Testis (tissue), 5 donors: ENCODE measurements at regions of chr4 and their contacts with region 1.

Region 1: DNA sequence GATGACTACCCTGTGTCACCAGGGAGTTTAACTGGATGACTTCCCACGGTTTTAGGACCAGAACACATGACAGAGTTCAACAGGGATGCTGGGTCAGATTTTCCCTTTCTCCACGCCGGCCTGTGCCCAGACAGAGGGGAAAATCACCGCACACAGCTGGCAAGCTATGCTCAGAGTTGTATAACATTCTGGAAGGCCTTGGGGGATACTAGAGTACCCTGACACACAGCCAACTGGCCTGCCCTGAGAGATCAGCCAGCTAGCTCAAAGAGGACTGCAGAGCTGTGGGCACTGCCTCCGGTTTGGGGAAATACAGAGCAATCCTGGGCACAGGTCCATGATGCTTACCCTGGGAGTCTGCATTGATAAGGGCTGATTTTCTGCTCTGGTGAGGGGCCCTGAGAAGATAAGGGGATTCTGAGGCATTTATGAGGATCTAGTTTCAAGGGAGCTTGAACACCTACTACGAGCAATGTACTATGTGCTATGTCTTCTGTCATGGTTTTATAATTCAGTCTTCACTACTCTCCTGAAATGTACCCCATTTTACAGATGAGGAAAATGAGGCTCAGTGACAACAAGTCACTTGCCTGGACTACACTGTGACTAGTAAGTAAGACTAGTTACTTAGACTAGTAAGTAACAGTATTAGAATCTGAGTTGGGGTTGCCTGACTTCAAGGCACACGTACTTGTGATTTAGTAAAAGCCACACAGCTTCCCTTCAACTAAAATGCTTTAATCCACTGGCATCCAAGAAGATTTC is 14.7 kb downstream of the C4orf54 start:
- DNase-seq: peak; percentile 84
- H3K4me3 ChIP-seq: no peak overlapping the region
- H3K27ac ChIP-seq: peak overlapping the region; percentile 6 to 59
- H3K4me1 ChIP-seq: peaks cover 48% of the 10 kb centered on the region
- H3K27me3 ChIP-seq: no peaks in the 10 kb centered on the region
- CTCF ChIP-seq: no peak
- POLR2A ChIP-seq: no peak

Region 2: GRCh38 chr4:99670409-99671073 is 27.6 kb after region 1 on chr4:
- intact Hi-C with region 1: loop called (anchors 2 kb)
- DNase-seq: peak; percentile 51
- H3K4me3 ChIP-seq: no peak overlapping the region
- H3K27ac ChIP-seq: peak overlapping the region; percentile 22 to 51
- H3K4me1 ChIP-seq: peaks cover 27% of the 10 kb centered on the region
- H3K27me3 ChIP-seq: no peaks in the 10 kb centered on the region
- CTCF ChIP-seq: no peak
- POLR2A ChIP-seq: no peak